ENCODE measurements at regions of chr11 and their contacts with region 1.

Region 1: GRCh38 chr11:130223291-130223971 is 63.8 kb downstream of the ST14 start:
- DNase-seq: no peak
- H3K4me3 ChIP-seq: no peak overlapping the region
- H3K27ac ChIP-seq: no peak overlapping the region
- H3K4me1 ChIP-seq: no peaks in the 10 kb centered on the region
- H3K27me3 ChIP-seq: no peaks in the 10 kb centered on the region
- CTCF ChIP-seq: no peak
- EP300 ChIP-seq: no peak
- POLR2A ChIP-seq: no peak

Region 2: DNA sequence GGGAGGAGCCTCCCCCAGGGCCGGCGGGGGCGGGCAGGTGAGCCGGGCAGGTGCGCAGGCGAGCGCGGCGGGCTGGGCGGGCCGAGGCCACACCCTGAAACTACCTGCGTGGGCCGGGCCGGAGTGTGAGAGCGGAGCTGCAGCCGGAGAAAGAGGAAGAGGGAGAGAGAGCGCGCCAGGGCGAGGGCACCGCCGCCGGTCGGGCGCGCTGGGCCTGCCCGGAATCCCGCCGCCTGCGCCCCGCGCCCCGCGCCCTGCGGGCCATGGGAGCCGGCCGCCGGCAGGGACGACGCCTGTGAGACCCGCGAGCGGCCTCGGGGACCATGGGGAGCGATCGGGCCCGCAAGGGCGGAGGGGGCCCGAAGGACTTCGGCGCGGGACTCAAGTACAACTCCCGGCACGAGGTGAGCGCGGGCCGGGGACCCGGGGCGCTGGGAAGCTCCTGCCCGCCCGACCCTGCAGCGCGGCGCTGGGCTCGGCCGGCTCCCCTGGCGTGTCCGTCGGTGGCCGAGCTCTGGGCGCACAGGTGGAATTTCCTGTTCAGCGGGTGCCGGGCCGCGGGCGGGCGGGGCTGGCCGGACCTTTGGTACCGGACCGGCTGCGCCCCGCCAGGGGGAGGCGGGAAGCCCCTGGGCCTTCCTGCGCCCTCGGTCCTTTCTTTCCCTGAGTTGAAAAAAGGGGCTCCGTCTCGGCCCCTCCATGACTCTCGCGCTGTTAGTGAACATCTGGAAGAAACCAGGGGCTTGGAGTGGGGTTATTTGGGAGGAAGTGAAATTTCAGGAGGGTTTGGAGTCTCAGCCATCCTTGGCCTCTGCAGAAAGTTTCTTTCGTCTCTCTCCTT is 63.6 kb before region 1 on chr11 and contains the start of gene ST14:
- intact Hi-C with region 1: no loop called
- DNase-seq: no peak
- H3K4me3 ChIP-seq: peak within 1 kb of the TSS; percentile 42 to 58 (median 44)
- H3K27ac ChIP-seq: no peak within 1 kb of the TSS
- H3K4me1 ChIP-seq: peaks cover 6 to 18% (median 14%) of the 10 kb centered on the region in 4 donors
- H3K27me3 ChIP-seq: peaks cover 0 to 61% (median 11%) of the 10 kb centered on the region in 4 donors
- CTCF ChIP-seq: no peak
- EP300 ChIP-seq: no peak
- POLR2A ChIP-seq: no peak
- total RNA-seq, gene ST14: 1.2 to 3.4 (median 2.6) TPM

Region 3: DNA sequence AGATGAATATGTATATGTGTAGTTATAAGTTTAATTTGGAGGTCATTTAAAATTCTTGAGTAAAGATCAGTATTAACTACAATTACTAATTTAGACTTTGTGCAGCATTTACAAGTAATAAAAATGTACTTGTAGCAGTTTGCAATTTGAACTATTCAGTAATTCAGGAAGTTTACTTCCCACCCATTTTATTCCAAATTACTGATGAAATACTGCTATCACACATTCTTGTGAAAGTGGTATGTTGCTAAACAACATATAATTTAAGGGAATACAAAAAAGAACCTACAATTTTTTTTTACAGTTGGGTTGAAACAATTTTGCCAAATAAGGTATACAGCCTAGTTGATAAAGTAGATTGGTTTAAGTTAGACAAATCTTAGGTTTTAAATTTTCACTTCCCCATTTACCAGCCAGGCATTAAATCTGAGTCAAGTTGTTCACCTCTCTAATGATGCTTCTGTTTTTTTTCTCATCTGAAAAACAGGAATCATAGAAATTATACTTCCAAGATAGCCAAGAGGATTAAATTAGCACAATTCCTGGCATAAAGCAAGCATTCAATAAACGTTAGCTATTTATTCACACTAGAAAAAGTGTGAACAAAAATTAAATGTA is 46.0 kb after region 1 on chr11:
- intact Hi-C with region 1: no loop called
- DNase-seq: no peak
- H3K4me3 ChIP-seq: no peak overlapping the region
- H3K27ac ChIP-seq: no peak overlapping the region
- H3K4me1 ChIP-seq: peaks cover 0 to 11% (median 7%) of the 10 kb centered on the region in 4 donors
- H3K27me3 ChIP-seq: no peaks in the 10 kb centered on the region
- CTCF ChIP-seq: no peak
- EP300 ChIP-seq: no peak
- POLR2A ChIP-seq: no peak

Region 4: GRCh38 chr11:130282111-130282510 is 58.7 kb after region 1 on chr11:
- intact Hi-C with region 1: no loop called
- DNase-seq: no peak
- H3K4me3 ChIP-seq: no peak overlapping the region
- H3K27ac ChIP-seq: no peak overlapping the region
- H3K4me1 ChIP-seq: no peaks in the 10 kb centered on the region
- H3K27me3 ChIP-seq: no peaks in the 10 kb centered on the region
- CTCF ChIP-seq: no peak
- EP300 ChIP-seq: no peak
- POLR2A ChIP-seq: no peak

Region 5: DNA sequence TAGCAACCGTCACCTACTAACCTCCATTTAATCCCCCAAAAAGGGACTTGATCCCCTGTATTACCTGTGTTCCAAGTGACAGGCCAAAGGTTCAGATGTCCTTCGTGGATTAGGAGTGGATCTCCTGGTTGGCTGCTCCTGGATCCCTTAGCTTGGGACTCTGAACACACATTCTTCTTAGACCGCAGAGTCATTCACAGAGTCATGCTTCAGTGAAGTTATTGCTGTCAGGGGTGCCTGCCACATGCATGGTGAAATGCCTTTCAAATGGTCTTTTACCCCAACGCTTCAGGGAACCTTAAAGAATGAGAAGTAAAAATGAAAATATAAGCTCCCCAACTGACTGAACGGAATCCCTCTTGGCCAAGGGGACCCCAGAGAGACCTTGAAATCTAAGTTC is 155.8 kb after region 1 on chr11:
- intact Hi-C with region 1: loop called (anchors 5 kb)
- DNase-seq: no peak
- H3K4me3 ChIP-seq: no peak overlapping the region
- H3K27ac ChIP-seq: no peak overlapping the region
- H3K4me1 ChIP-seq: peaks cover 0 to 11% (median 2%) of the 10 kb centered on the region in 4 donors
- H3K27me3 ChIP-seq: no peaks in the 10 kb centered on the region
- CTCF ChIP-seq: no peak
- EP300 ChIP-seq: no peak
- POLR2A ChIP-seq: no peak